ENCODE measurements at regions of chr14 and their contacts with region 1.

Region 1: GRCh38 chr14:74207947-74208346 is 31.3 kb upstream of the VSX2 start:
- DNase-seq: peak; percentile 54
- ATAC-seq: peak; percentile 78
- H3K4me3 Mint-ChIP-seq: no peak overlapping the region
- H3K27ac Mint-ChIP-seq: no peak overlapping the region
- H3K4me1 Mint-ChIP-seq: no peaks in the 10 kb centered on the region
- H3K27me3 Mint-ChIP-seq: no peaks in the 10 kb centered on the region
- CTCF ChIP-seq: no peak

Region 2: GRCh38 chr14:74140374-74140850 is 67.5 kb before region 1 on chr14:
- CTCF ChIA-PET with region 1: no interaction called
- POLR2A ChIA-PET with region 1: no interaction called
- DNase-seq: peak; percentile 15
- ATAC-seq: peak; percentile 55
- H3K4me3 Mint-ChIP-seq: no peak overlapping the region
- H3K27ac Mint-ChIP-seq: no peak overlapping the region
- H3K4me1 Mint-ChIP-seq: peaks cover under 1% of the 10 kb centered on the region
- H3K27me3 Mint-ChIP-seq: no peaks in the 10 kb centered on the region
- CTCF ChIP-seq: no peak

Region 3: GRCh38 chr14:74240794-74241651 is 33.1 kb after region 1 on chr14:
- CTCF ChIA-PET with region 1: interaction called, 11 read pairs
- POLR2A ChIA-PET with region 1: no interaction called
- DNase-seq: peak; percentile 45
- ATAC-seq: peak; percentile 6
- H3K4me3 Mint-ChIP-seq: peak overlapping the region; percentile 66
- H3K27ac Mint-ChIP-seq: no peak overlapping the region
- H3K4me1 Mint-ChIP-seq: peaks cover 36% of the 10 kb centered on the region
- H3K27me3 Mint-ChIP-seq: peaks cover 96% of the 10 kb centered on the region
- CTCF ChIP-seq: no peak

Region 4: DNA sequence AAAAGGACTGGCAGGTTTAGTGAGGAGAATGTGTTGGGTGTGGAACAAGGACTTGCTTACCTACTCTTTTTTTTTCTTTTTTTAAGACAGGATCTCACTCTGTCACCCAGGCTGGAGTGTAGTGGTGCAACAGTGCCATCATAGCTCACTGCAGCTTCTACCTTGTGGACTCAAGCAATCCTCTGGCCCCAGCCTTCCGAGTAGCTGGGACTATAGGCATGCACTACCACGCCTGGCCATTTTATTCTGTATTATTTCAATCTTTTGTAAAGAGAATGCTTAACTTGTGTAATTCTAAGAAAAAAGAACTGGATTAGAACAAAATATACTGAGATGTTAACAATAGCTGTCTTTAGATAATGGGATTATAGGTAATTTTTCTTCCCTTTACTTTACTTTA is 138.4 kb after region 1 on chr14:
- CTCF ChIA-PET with region 1: no interaction called
- POLR2A ChIA-PET with region 1: no interaction called
- DNase-seq: no peak
- ATAC-seq: peak; percentile 20; the same call in 1 of the 2 replicates
- H3K4me3 Mint-ChIP-seq: peak overlapping the region; percentile 93; the same call in 1 of the 2 replicates
- H3K27ac Mint-ChIP-seq: peak overlapping the region; percentile 57
- H3K4me1 Mint-ChIP-seq: peaks cover 30% of the 10 kb centered on the region
- H3K27me3 Mint-ChIP-seq: no peaks in the 10 kb centered on the region
- CTCF ChIP-seq: no peak